ENCODE measurements at regions of chr1 and their contacts with region 1.

Region 1: DNA sequence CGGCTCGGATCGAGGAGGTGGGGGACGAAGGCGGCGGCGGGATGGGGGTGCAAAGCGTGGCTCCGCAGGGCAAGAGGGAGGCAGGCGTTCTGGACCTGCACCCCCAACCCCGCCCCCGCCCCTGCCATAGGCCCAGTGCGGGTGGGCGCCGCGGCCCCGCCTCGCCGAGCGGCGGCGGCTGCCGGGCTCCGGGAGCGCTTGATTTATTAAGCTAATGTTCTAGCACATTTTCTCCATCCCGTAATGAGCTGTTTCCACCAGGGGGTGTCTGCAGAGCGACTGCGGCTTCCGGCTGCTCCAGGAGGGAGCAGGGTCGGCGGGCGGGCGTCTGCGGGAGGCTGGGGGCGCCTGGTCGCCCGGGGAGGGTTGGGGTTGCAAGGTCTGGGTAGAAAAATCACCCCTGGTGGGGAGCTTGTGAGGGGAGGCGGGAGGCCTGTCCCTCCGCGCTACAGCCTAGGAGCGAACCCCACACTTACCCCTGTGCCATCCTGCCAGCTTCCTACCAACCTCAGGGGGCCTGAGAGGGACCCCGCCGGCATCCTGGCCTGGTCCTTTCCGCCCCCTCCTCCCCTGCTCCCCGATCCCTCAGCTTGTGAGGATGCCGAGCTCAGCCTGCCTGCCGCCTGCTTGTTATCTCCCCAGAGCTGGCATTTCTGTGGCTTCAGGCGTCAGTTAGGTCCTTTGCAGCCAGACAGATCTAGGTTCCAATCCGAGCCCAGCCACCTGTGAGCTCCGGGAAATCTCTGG is 48.5 kb upstream of the ACOT11 start:
- DNase-seq: peak; percentile 50 to 56
- H3K4me3 ChIP-seq: peak overlapping the region; percentile 32
- H3K4me3 Mint-ChIP-seq: peak overlapping the region; percentile 66
- H3K27ac Mint-ChIP-seq: no peak overlapping the region
- H3K4me1 ChIP-seq: peaks cover 3% of the 10 kb centered on the region; the same call in 1 of the 2 replicates
- H3K4me1 Mint-ChIP-seq: peaks cover 10% of the 10 kb centered on the region
- H3K27me3 ChIP-seq: no peaks in the 10 kb centered on the region
- H3K27me3 Mint-ChIP-seq: no peaks in the 10 kb centered on the region
- CTCF ChIP-seq: peak; percentile 31 to 51

Region 2: GRCh38 chr1:54564312-54565112 is 65.0 kb after region 1 on chr1:
- CTCF ChIA-PET with region 1: no interaction called
- POLR2A ChIA-PET with region 1: no interaction called
- intact Hi-C with region 1: no loop called
- DNase-seq: peak; percentile 54 to 89
- H3K4me3 ChIP-seq: peak overlapping the region; percentile 21
- H3K4me3 Mint-ChIP-seq: peak overlapping the region; percentile 45
- H3K27ac Mint-ChIP-seq: no peak overlapping the region
- H3K4me1 ChIP-seq: peaks cover 14% of the 10 kb centered on the region
- H3K4me1 Mint-ChIP-seq: peaks cover 11% of the 10 kb centered on the region
- H3K27me3 ChIP-seq: no peaks in the 10 kb centered on the region
- H3K27me3 Mint-ChIP-seq: no peaks in the 10 kb centered on the region
- CTCF ChIP-seq: no peak

Region 3: GRCh38 chr1:54663725-54664124 is 164.2 kb after region 1 on chr1:
- CTCF ChIA-PET with region 1: interaction called, 10 read pairs
- POLR2A ChIA-PET with region 1: no interaction called
- intact Hi-C with region 1: no loop called
- DNase-seq: no peak
- H3K4me3 ChIP-seq: no peak overlapping the region
- H3K4me3 Mint-ChIP-seq: no peak overlapping the region
- H3K27ac Mint-ChIP-seq: no peak overlapping the region
- H3K4me1 ChIP-seq: no peaks in the 10 kb centered on the region
- H3K4me1 Mint-ChIP-seq: no peaks in the 10 kb centered on the region
- H3K27me3 ChIP-seq: no peaks in the 10 kb centered on the region
- H3K27me3 Mint-ChIP-seq: no peaks in the 10 kb centered on the region
- CTCF ChIP-seq: no peak

Region 4: GRCh38 chr1:54810100-54810942 is 310.8 kb after region 1 on chr1:
- CTCF ChIA-PET with region 1: interaction called, 4 read pairs
- POLR2A ChIA-PET with region 1: no interaction called
- intact Hi-C with region 1: loop called (anchors 2 kb)
- DNase-seq: peak; percentile 56 to 75
- H3K4me3 ChIP-seq: no peak overlapping the region
- H3K4me3 Mint-ChIP-seq: no peak overlapping the region
- H3K27ac Mint-ChIP-seq: no peak overlapping the region
- H3K4me1 ChIP-seq: no peaks in the 10 kb centered on the region
- H3K4me1 Mint-ChIP-seq: peaks cover 2% of the 10 kb centered on the region
- H3K27me3 ChIP-seq: no peaks in the 10 kb centered on the region
- H3K27me3 Mint-ChIP-seq: no peaks in the 10 kb centered on the region
- CTCF ChIP-seq: peak; percentile 66 to 69

Measured in Caco-2 (cell line).